B cell (primary cell): ENCODE measurements at regions of chr4 and their contacts with region 1.

Region 1: DNA sequence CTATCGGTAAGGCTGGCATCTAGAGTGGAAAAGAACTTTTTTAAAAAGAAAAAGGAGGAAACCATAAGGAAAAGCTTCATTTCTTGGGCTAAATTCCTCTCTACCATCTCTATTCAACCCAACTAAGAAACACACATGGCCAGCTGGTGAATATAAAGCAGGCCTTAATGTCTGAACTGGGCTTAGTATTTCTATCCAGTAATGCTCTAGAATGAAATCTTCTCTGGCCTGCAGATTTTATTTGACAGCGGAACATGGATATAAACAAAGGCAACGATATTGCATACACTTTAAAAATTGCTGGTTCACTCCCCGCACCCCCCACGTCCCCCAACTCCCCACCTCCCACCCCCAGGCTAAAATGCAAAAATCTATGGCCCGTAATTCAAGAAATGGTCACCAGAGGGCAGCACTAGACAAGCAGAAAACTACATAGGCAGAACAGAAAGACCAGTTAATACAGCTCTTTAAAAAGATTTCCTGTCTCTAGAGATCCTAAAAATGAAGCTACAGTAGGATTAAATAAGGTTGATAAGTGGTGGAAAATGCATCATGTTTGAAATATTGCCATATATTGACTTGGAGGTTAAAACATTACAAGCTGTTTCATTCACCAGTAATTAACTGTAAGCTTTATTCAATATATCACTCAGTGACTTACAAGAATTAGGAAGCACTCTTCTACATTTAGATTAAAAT is 155.2 kb upstream of the GALNT7 start:
- DNase-seq: peak; percentile 69
- ATAC-seq: peak; percentile 57
- H3K4me3 ChIP-seq: no peak overlapping the region
- H3K4me3 Mint-ChIP-seq: no peak overlapping the region
- H3K27ac ChIP-seq: no peak overlapping the region
- H3K27ac Mint-ChIP-seq: no peak overlapping the region
- H3K4me1 ChIP-seq: no peaks in the 10 kb centered on the region
- H3K4me1 Mint-ChIP-seq: no peaks in the 10 kb centered on the region
- H3K27me3 ChIP-seq: peaks cover 0 to 2% (median 0%) of the 10 kb centered on the region in 4 experiments
- H3K27me3 Mint-ChIP-seq: peaks cover 7% of the 10 kb centered on the region
- CTCF ChIP-seq: peak; percentile 86

Region 2: DNA sequence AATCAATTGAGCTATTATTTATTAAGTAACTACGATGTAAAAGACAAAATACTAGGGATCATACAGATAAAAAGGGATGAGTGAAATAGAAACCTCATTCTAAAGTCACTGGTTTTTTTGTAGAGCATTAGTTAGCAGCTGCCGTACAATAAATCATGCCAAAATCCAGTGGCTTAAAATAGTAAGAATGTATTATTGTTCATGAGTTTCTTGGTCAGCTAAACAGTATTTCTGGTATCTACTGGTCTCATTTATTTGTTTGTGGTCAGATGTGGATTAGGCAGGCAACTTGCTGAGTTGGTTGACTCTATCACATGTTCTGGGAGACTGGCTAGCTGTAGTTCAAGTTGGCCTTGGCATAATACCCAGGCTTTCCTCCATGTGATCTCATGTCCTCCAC is 532.9 kb before region 1 on chr4:
- CTCF ChIA-PET with region 1: no interaction called
- POLR2A ChIA-PET with region 1: no interaction called
- intact Hi-C with region 1: no loop called
- DNase-seq: no peak
- ATAC-seq: no peak
- H3K4me3 ChIP-seq: no peak overlapping the region
- H3K4me3 Mint-ChIP-seq: no peak overlapping the region
- H3K27ac ChIP-seq: no peak overlapping the region
- H3K27ac Mint-ChIP-seq: no peak overlapping the region
- H3K4me1 ChIP-seq: no peaks in the 10 kb centered on the region
- H3K4me1 Mint-ChIP-seq: no peaks in the 10 kb centered on the region
- H3K27me3 ChIP-seq: no peaks in the 10 kb centered on the region
- H3K27me3 Mint-ChIP-seq: no peaks in the 10 kb centered on the region
- CTCF ChIP-seq: no peak

Region 3: GRCh38 chr4:173025131-173025530 is 11.8 kb after region 1 on chr4:
- CTCF ChIA-PET with region 1: interaction called, 20 read pairs
- POLR2A ChIA-PET with region 1: no interaction called
- intact Hi-C with region 1: no loop called
- DNase-seq: peak; percentile 51
- ATAC-seq: peak; percentile 31
- H3K4me3 ChIP-seq: no peak overlapping the region
- H3K4me3 Mint-ChIP-seq: no peak overlapping the region
- H3K27ac ChIP-seq: no peak overlapping the region
- H3K27ac Mint-ChIP-seq: no peak overlapping the region
- H3K4me1 ChIP-seq: no peaks in the 10 kb centered on the region
- H3K4me1 Mint-ChIP-seq: no peaks in the 10 kb centered on the region
- H3K27me3 ChIP-seq: no peaks in the 10 kb centered on the region
- H3K27me3 Mint-ChIP-seq: peaks cover 2% of the 10 kb centered on the region
- CTCF ChIP-seq: peak; percentile 64

Region 4: GRCh38 chr4:173257732-173258717 is 244.6 kb after region 1 on chr4:
- CTCF ChIA-PET with region 1: interaction called, 181 read pairs
- POLR2A ChIA-PET with region 1: no interaction called
- intact Hi-C with region 1: loop called (anchors 1 kb)
- DNase-seq: peak; percentile 66
- ATAC-seq: peak; percentile 73
- H3K4me3 ChIP-seq: no peak overlapping the region
- H3K4me3 Mint-ChIP-seq: no peak overlapping the region
- H3K27ac ChIP-seq: no peak overlapping the region
- H3K27ac Mint-ChIP-seq: no peak overlapping the region
- H3K4me1 ChIP-seq: peaks cover 8 to 11% of the 10 kb centered on the region in 2 donors
- H3K4me1 Mint-ChIP-seq: peaks cover 33% of the 10 kb centered on the region
- H3K27me3 ChIP-seq: no peaks in the 10 kb centered on the region
- H3K27me3 Mint-ChIP-seq: no peaks in the 10 kb centered on the region
- CTCF ChIP-seq: peak; percentile 81

Region 5: GRCh38 chr4:173264684-173265185 is 251.4 kb after region 1 on chr4:
- CTCF ChIA-PET with region 1: interaction called, 56 read pairs
- POLR2A ChIA-PET with region 1: no interaction called
- intact Hi-C with region 1: no loop called
- DNase-seq: peak; percentile 43
- ATAC-seq: peak; percentile 58
- H3K4me3 ChIP-seq: peak overlapping the region in 1 of 5 experiments; percentile 14
- H3K4me3 Mint-ChIP-seq: peak overlapping the region; percentile 62
- H3K27ac ChIP-seq: no peak overlapping the region
- H3K27ac Mint-ChIP-seq: no peak overlapping the region
- H3K4me1 ChIP-seq: peaks cover 29 to 30% of the 10 kb centered on the region in 2 donors
- H3K4me1 Mint-ChIP-seq: peaks cover 46% of the 10 kb centered on the region
- H3K27me3 ChIP-seq: no peaks in the 10 kb centered on the region
- H3K27me3 Mint-ChIP-seq: no peaks in the 10 kb centered on the region
- CTCF ChIP-seq: no peak

Region 6: GRCh38 chr4:173281406-173282255 is 268.2 kb after region 1 on chr4:
- CTCF ChIA-PET with region 1: interaction called, 17 read pairs
- POLR2A ChIA-PET with region 1: no interaction called
- intact Hi-C with region 1: no loop called
- DNase-seq: no peak
- ATAC-seq: no peak
- H3K4me3 ChIP-seq: no peak overlapping the region
- H3K4me3 Mint-ChIP-seq: peak overlapping the region; percentile 17
- H3K27ac ChIP-seq: no peak overlapping the region
- H3K27ac Mint-ChIP-seq: no peak overlapping the region
- H3K4me1 ChIP-seq: peaks cover 4 to 10% of the 10 kb centered on the region in 2 donors
- H3K4me1 Mint-ChIP-seq: peaks cover 16% of the 10 kb centered on the region
- H3K27me3 ChIP-seq: no peaks in the 10 kb centered on the region
- H3K27me3 Mint-ChIP-seq: no peaks in the 10 kb centered on the region
- CTCF ChIP-seq: no peak

Region 7: DNA sequence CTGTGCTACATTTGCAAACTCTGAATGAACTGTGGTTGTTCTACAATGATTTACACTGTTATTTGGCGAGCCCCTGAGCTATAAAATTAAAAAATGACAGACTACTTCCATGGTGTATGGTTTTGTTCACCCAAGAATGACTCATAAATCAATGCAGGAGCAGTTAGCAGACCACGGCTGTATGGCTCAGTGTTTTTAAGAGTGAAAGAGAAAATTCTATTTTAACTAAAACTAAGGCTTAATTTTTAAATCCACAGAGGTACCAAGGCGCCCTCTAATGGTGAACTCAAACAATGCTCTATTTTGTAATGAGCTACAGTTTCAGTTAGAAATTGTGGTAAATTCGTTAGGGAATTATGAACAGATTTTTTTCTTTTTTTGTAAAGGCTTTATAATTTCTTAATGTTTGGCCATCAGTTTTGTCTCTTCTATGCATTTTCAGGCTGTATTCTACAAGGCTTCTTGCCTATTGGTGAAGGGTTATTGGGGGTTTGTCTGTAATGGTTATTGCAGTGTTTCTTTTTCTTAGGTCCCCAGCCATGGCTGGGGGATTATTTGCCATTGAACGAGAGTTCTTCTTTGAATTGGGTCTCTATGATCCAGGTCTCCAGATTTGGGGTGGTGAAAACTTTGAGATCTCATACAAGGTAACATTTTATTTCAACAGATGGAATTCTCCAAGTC is 288.3 kb after region 1 on chr4:
- CTCF ChIA-PET with region 1: interaction called, 115 read pairs
- POLR2A ChIA-PET with region 1: no interaction called
- intact Hi-C with region 1: loop called (anchors 1 kb)
- DNase-seq: peak; percentile 34
- ATAC-seq: no peak
- H3K4me3 ChIP-seq: no peak overlapping the region
- H3K4me3 Mint-ChIP-seq: no peak overlapping the region
- H3K27ac ChIP-seq: no peak overlapping the region
- H3K27ac Mint-ChIP-seq: no peak overlapping the region
- H3K4me1 ChIP-seq: no peaks in the 10 kb centered on the region
- H3K4me1 Mint-ChIP-seq: peaks cover 2% of the 10 kb centered on the region
- H3K27me3 ChIP-seq: no peaks in the 10 kb centered on the region
- H3K27me3 Mint-ChIP-seq: no peaks in the 10 kb centered on the region
- CTCF ChIP-seq: peak; percentile 85

Region 8: DNA sequence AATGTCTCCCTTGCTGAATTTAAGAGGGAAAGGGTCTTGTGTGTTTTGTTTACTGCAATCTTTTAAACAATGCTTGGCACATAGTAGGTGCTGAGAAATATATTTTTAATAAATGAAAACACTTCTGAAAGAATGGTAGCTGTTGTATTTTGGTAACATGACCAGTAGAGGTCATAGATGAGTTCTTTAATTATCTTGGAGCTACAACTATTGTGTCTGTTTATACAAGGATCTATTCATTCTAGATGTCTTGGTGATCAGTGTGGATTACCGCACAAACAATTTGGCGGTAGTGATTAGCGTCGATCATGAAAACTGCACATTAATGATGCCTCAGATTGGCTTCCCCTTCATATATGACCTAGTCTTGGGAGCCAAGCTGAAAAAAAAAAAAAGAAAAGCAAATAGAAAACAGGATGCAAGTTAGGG is 407.0 kb after region 1 on chr4:
- CTCF ChIA-PET with region 1: interaction called, 38 read pairs
- POLR2A ChIA-PET with region 1: no interaction called
- intact Hi-C with region 1: loop called (anchors 1 kb)
- DNase-seq: peak; percentile 19
- ATAC-seq: no peak
- H3K4me3 ChIP-seq: no peak overlapping the region
- H3K4me3 Mint-ChIP-seq: no peak overlapping the region
- H3K27ac ChIP-seq: no peak overlapping the region
- H3K27ac Mint-ChIP-seq: no peak overlapping the region
- H3K4me1 ChIP-seq: peaks cover 0 to 6% of the 10 kb centered on the region in 2 donors
- H3K4me1 Mint-ChIP-seq: peaks cover 7% of the 10 kb centered on the region
- H3K27me3 ChIP-seq: no peaks in the 10 kb centered on the region
- H3K27me3 Mint-ChIP-seq: peaks cover 2% of the 10 kb centered on the region
- CTCF ChIP-seq: peak; percentile 55

Region 9: GRCh38 chr4:173752610-173753230 is 739.3 kb after region 1 on chr4:
- CTCF ChIA-PET with region 1: no interaction called
- POLR2A ChIA-PET with region 1: no interaction called
- intact Hi-C with region 1: no loop called
- DNase-seq: peak; percentile 2
- ATAC-seq: no peak
- H3K4me3 ChIP-seq: no peak overlapping the region
- H3K4me3 Mint-ChIP-seq: no peak overlapping the region
- H3K27ac ChIP-seq: no peak overlapping the region
- H3K27ac Mint-ChIP-seq: no peak overlapping the region
- H3K4me1 ChIP-seq: no peaks in the 10 kb centered on the region
- H3K4me1 Mint-ChIP-seq: no peaks in the 10 kb centered on the region
- H3K27me3 ChIP-seq: no peaks in the 10 kb centered on the region
- H3K27me3 Mint-ChIP-seq: no peaks in the 10 kb centered on the region
- CTCF ChIP-seq: no peak